ENCODE measurements at regions of chr1 and their contacts with region 1.

Region 1: GRCh38 chr1:206684478-206685333 is at the start of gene MAPKAPK2:
- DNase-seq: peak; percentile 63
- H3K4me3 Mint-ChIP-seq: peak within 1 kb of the TSS; percentile 94
- H3K27ac Mint-ChIP-seq: peak within 1 kb of the TSS; percentile 93
- H3K4me1 Mint-ChIP-seq: peaks cover 57% of the 10 kb centered on the region
- H3K27me3 Mint-ChIP-seq: peaks cover 1% of the 10 kb centered on the region
- total RNA-seq, gene MAPKAPK2: 92.3 and 98.8 TPM in 2 replicates

Region 2: GRCh38 chr1:206489980-206490770 is 194.5 kb before region 1 on chr1:
- intact Hi-C with region 1: no loop called
- DNase-seq: peak; percentile 56
- H3K4me3 Mint-ChIP-seq: no peak overlapping the region
- H3K27ac Mint-ChIP-seq: no peak overlapping the region
- H3K4me1 Mint-ChIP-seq: peaks cover 7% of the 10 kb centered on the region
- H3K27me3 Mint-ChIP-seq: no peaks in the 10 kb centered on the region

Region 3: DNA sequence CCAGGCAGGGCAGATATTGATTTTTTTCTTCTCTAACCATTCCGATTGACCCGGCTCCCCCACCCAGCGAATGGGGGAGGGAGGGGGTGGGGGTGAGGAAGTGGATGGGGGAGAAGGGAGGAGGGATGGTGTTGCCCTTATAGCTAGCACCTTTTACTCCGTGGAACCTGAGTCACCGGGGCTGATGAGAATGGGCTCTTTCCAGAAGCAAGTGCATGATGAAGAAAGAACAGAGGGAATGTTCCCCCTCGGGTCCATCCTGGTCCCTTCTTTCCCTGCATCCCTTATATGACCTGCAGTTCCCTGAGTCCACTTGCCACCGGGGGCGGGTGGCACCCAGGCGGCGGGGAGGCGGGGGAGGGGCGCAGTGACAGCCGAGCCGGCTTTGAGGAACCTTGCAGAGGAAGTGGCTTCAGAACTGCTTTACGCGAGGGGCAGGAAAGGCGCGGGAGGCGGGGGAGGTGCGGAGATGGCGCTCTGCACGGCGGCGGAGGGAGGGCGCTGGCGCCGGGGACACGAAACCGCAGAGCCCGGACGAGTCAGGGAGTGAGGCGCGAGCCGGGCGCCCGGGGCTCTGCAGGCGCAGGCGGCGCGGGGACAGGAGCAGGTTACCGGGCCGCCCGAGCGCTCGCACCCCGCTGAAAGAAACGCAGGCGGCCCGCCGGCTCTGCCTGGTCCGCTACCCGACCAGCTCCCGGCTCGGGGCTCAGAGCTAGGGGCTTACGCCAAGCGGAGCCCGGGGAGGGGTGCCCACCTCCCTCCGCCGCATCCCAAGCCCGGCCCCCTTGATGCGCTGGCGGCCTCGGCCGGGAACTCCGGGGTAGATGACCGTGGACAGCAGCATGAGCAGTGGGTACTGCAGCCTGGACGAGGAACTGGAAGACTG is 127.7 kb before region 1 on chr1:
- intact Hi-C with region 1: loop called (anchors 5 kb)
- DNase-seq: peak; percentile 89
- H3K4me3 Mint-ChIP-seq: peak overlapping the region; percentile 97
- H3K27ac Mint-ChIP-seq: peak overlapping the region; percentile 95
- H3K4me1 Mint-ChIP-seq: peaks cover 65% of the 10 kb centered on the region
- H3K27me3 Mint-ChIP-seq: no peaks in the 10 kb centered on the region

Region 4: DNA sequence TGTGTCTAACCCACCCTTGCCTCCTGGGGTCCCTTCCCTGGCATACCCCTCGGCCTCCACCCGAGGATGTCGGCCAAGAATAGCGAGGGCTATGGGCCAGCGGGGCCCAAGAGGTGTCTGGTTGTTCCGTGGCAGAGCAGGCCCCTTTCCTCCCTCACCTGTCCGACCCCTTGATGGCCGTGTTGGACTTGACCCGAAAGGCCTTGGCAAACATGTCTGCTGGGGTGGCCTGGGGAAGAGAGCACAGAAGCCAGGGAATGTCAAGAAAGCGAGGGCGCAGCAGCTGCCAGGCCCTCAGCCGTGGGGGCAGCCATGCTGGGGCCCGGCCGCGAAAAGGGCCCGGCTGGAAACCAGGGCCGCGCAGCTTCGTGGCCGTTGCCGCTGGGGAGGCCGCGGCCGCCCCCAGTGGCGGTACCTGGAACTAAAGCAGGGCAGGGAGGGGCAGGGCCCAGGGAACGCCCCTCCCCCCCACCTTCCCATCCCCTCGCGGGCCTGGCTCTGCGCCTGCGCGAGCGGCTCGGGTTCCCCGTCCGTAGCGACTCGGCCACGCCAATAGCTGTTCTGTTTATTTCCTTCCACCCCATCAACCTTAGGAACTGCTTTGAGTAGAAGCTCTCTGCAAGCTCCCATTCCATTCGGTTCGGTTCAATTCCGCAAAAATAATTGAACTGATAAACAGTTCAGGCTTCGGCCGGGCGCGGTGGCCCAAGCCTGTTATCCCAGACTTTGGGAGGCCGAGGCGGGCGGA is 72.4 kb before region 1 on chr1 and contains the start of gene EIF2D:
- intact Hi-C with region 1: loop called (anchors 1 kb)
- DNase-seq: peak; percentile 91
- H3K4me3 Mint-ChIP-seq: peak within 1 kb of the TSS; percentile 92
- H3K27ac Mint-ChIP-seq: peak within 1 kb of the TSS; percentile 84
- H3K4me1 Mint-ChIP-seq: peaks cover 30% of the 10 kb centered on the region
- H3K27me3 Mint-ChIP-seq: peaks cover 7% of the 10 kb centered on the region
- total RNA-seq, gene EIF2D: 72.7 and 73.3 TPM in 2 replicates

Region 5: DNA sequence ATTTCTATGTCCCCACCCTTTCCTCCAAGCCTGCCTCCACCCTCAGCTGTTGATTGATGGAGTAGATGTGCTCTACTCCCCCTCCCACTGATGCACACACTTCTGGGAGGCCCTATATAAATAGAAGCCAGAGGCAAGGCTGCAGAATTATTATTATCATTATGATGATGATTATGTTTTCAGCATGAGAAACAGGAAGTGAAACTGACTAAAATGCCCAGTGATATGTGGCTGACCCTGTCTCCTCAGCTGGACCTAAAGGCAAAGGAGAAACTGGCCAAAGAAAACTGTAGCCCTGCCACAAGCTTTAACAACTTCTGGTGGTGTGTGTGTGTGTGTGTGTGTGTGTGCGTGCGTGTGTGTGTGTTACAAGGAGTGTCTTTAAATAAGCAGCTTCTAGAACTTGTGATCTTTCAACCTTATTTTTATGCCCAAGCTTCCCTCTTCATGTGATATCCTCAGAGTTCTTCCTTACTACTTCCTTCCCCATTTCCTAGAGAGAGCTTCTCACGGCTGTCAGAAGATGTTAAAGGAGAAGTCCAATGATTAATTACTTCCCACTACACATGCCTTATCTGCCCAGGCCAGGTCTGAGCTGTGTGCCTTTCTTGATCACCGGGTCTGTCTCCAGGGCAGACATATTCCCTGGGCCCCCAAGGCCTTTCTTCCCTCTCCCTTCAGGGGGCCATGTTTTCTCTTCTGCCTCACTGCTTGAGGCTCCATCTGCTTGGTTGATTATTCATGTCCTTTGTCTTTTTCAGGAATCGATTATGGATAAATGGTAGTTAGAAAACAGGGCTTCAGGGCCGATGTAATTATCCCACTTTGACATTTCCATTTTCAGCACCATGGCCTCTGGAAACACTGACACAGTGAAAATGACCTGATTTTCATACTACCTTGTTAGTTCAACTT is 11.6 kb before region 1 on chr1:
- intact Hi-C with region 1: no loop called
- DNase-seq: no peak
- H3K4me3 Mint-ChIP-seq: no peak overlapping the region
- H3K27ac Mint-ChIP-seq: no peak overlapping the region
- H3K4me1 Mint-ChIP-seq: peaks cover 5% of the 10 kb centered on the region
- H3K27me3 Mint-ChIP-seq: peaks cover 4% of the 10 kb centered on the region

Region 6: DNA sequence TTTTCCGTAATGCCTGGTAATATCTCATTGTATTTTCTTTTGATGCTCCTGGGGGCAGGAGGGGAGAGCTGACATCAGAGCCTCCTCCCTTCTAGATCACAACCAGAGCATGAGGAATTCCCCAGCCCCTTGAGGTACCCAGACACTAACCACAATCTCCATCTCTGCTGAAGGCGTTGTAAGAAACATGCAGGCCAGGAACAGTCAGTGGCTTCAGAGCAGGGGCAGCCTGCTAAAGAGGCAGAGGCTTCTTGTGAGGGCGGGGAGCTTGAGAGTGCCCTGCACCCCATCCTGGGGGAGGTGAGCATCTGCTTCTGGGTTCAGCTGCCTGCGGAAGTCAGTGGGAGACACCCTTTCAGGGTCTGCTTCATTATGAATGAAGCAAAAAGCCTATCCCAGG is 19.0 kb after region 1 on chr1:
- intact Hi-C with region 1: loop called (anchors 1 kb)
- DNase-seq: peak; percentile 50
- H3K4me3 Mint-ChIP-seq: peak overlapping the region; percentile 34
- H3K27ac Mint-ChIP-seq: peak overlapping the region; percentile 81
- H3K4me1 Mint-ChIP-seq: peaks cover 82% of the 10 kb centered on the region
- H3K27me3 Mint-ChIP-seq: no peaks in the 10 kb centered on the region

Region 7: GRCh38 chr1:206716870-206717673 is 32.4 kb after region 1 on chr1:
- intact Hi-C with region 1: loop called (anchors 2 kb)
- DNase-seq: peak; percentile 39
- H3K4me3 Mint-ChIP-seq: peak overlapping the region; percentile 52
- H3K27ac Mint-ChIP-seq: peak overlapping the region; percentile 83
- H3K4me1 Mint-ChIP-seq: peaks cover 74% of the 10 kb centered on the region
- H3K27me3 Mint-ChIP-seq: no peaks in the 10 kb centered on the region

Region 8: DNA sequence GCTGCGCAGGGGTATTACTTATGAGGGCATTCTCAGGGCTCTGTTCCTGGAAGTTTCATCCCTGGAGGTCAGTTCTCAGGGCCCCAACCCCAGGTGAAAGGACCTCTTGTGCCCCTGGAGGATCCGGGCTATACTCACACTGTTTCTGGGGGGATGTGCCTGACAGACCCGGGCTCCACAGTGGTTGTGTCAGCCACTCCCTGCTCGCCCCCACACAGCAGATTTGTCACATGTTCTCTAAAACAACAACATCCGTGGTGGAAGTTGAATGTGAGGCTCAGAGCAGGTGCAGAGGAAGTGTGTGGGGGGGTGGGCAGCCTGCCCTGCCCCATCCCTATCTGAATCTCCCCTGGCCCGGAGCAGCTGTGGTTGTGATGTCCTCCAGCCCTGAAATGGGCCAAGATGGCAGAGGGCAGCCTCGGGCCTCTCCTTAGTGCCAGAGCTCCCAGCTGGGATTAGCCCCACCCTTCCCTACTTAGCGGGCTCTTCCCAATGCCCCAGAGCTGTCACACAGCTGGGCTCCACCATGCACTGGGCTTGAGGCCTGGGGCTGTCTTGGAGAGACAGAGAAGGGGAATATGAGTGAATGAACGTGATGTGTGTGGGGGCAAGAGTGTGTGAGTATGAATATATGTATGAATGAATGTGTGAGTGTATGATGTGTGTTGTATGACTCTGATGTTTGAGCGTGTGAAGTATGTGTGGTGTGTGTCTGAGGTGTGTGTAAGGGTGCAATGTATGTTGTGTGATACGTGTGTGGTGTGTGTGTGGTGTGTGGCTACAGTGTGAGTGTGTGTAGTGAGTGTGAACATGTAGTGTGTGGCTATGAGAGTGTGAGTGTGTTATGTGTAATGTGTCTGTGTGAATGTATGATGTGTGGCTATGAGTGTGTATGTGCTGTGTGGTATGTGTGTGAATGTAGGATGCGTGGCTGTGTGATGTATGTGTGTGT is 238.6 kb after region 1 on chr1:
- intact Hi-C with region 1: loop called (anchors 1 kb)
- DNase-seq: peak; percentile 49
- H3K4me3 Mint-ChIP-seq: no peak overlapping the region
- H3K27ac Mint-ChIP-seq: no peak overlapping the region
- H3K4me1 Mint-ChIP-seq: peaks cover 30% of the 10 kb centered on the region
- H3K27me3 Mint-ChIP-seq: no peaks in the 10 kb centered on the region

Measured in activated T-helper 2 cell treated with anti-CD3 and anti-CD28 coated beads, Interferon-gamma antibody, Interleukin-2, Interleukin-4, amounts not matched to agents 10 μg/mL and 5 μg/mL and 100 μg/mL, durations not matched to agents 14 hours and 24 hours and 36 hours (primary cell).